ENCODE measurements at regions of chr2 and their contacts with region 1.

Region 1: GRCh38 chr2:201451292-201452057 is at the starts of genes STRADB and TRAK2:
- DNase-seq: peak; percentile 96
- H3K4me3 ChIP-seq: peak within 1 kb of the TSS; percentile 95 to 98
- H3K27ac ChIP-seq: peak within 1 kb of the TSS; percentile 86 to 93
- H3K4me1 ChIP-seq: peaks cover 6 to 13% of the 10 kb centered on the region in 2 experiments; a peak in 3 of 4 replicates
- H3K27me3 ChIP-seq: no peaks in the 10 kb centered on the region
- CTCF ChIP-seq: peak; percentile 33; the same call in 1 of the 2 replicates
- EP300 ChIP-seq: 0 out of 4 replicates have a peak, but pooled peaks of 1 of the 2 experiments have one; percentile 9
- RAD21 ChIP-seq: peak; percentile 2; the same call in 1 of the 2 replicates
- polyA plus RNA-seq, gene STRADB: 27.0 and 33.6 TPM in 2 replicates
- polyA plus RNA-seq, gene TRAK2: 10.4 and 14.6 TPM in 2 replicates

Region 2: DNA sequence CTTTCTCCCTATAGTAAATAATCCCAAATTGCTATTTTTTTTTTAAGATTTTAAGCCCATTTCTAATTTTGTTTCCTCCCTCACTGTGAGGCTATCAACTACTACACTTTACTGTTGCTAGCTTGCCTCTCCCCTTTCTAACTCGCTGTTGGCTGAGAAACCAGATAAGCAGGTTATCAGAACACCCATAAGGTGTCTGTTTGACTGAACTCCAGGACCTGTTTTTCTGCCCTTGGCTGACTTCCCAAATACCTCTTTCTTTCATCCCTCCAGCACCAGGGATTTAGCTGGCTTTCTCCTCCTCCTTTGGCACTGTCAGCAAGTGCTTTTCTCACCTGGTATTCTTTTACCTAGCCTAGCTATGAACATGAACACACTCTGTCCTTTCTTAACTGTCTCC is 11.3 kb before region 1 on chr2:
- CTCF ChIA-PET with region 1: interaction called, 16 read pairs
- POLR2A ChIA-PET with region 1: interaction called, 5 read pairs
- DNase-seq: peak; percentile 65
- H3K4me3 ChIP-seq: no peak overlapping the region
- H3K27ac ChIP-seq: peak overlapping the region in 1 of 2 experiments; percentile 43; a peak in 1 of 4 replicates
- H3K4me1 ChIP-seq: peaks cover 7 to 8% of the 10 kb centered on the region in 2 experiments; a peak in 3 of 4 replicates
- H3K27me3 ChIP-seq: no peaks in the 10 kb centered on the region
- CTCF ChIP-seq: no peak
- EP300 ChIP-seq: peak in 1 of 2 experiments; percentile 80; a peak in 2 of 4 replicates
- RAD21 ChIP-seq: no peak; the same call in 1 of the 2 replicates